A673 (cell line): ENCODE measurements at regions of chr16 and their contacts with region 1.

Region 1: GRCh38 chr16:75043175-75043895 is 44.5 kb downstream of the ZNRF1 start:
- DNase-seq: no peak
- H3K4me3 ChIP-seq: no peak overlapping the region
- H3K27ac ChIP-seq: no peak overlapping the region
- H3K4me1 ChIP-seq: peaks cover 19% of the 10 kb centered on the region
- H3K27me3 ChIP-seq: no peaks in the 10 kb centered on the region
- CTCF ChIP-seq: no peak

Region 2: DNA sequence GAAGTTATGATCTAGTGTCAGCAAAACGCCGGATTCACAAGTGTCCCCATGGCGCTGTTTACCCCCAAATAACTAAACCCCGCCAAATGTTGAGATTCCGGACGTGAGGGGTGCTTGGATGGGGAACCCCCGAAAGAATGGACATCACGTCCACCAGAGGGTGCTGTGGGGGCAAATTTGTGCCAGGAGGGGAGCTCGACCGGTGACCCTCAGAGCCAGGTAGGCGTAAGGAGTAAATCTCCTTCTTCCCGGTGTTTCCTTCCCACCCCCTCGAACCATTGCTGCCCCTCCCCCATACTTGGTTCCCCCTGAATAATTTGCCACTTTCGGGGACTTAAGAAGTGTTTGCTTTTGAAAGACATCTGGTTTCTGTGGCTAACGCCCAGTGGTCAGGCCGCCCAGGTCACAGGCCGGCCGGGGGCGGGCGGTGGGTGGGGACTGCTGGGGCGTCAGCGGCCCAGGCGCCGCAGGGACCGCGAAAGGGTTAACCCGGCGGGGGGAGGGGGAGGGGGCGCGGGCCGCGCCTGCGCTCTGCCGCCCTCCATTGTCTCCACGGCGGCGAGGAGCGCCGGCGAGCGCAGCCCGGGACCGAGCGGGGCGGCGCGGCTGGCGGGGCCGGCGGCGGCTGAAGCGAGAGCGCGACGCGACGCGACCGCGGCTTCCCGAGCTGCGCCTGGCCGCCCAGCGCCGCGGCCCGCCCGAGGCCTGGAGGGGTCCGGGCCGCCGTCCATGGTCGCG is 44.7 kb before region 1 on chr16 and contains the start of gene ZNRF1:
- CTCF ChIA-PET with region 1: no interaction called
- POLR2A ChIA-PET with region 1: no interaction called
- intact Hi-C with region 1: loop called (anchors 5 kb)
- DNase-seq: peak; percentile 86
- H3K4me3 ChIP-seq: peak within 1 kb of the TSS; percentile 95
- H3K27ac ChIP-seq: peak within 1 kb of the TSS; percentile 89
- H3K4me1 ChIP-seq: peaks cover 20% of the 10 kb centered on the region
- H3K27me3 ChIP-seq: no peaks in the 10 kb centered on the region
- CTCF ChIP-seq: peak; percentile 82
- total RNA-seq, gene ZNRF1: 55.1 and 59.9 TPM in 2 replicates

Region 3: DNA sequence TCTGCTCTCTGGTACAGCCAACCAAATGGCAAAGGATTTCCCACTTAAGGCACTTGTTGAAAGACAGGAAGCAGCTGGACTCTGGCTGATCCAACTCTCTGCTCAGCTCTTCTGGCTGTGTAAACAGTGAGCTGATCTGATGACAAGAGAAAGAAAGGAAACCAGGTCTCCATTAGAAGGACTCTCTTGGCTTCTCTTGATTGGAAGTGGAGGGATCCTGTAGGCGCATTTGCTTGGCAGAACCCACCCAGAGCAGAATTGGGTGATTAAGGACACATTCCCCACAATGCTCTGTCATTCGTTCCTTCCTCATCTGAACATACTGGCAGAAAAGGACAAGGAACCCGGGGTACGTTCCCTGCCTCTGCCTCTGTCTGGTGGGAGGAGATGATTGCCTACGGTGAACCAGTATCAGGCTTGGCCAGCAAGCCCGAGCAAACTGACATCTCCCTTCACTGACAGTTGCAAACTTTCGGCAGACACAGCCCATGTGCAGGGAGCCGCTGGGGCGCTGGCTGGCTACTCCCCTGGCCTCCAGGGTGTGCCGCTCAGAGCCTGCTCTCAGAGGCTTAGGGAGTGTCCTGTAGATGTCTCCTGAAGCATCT is 44.1 kb after region 1 on chr16:
- CTCF ChIA-PET with region 1: no interaction called
- POLR2A ChIA-PET with region 1: no interaction called
- intact Hi-C with region 1: no loop called
- DNase-seq: no peak
- H3K4me3 ChIP-seq: no peak overlapping the region
- H3K27ac ChIP-seq: no peak overlapping the region
- H3K4me1 ChIP-seq: peaks cover 6% of the 10 kb centered on the region
- H3K27me3 ChIP-seq: no peaks in the 10 kb centered on the region
- CTCF ChIP-seq: no peak